Heart right ventricle (tissue), 16 donors: ENCODE measurements at regions of chr17 and their contacts with region 1.

Region 1: DNA sequence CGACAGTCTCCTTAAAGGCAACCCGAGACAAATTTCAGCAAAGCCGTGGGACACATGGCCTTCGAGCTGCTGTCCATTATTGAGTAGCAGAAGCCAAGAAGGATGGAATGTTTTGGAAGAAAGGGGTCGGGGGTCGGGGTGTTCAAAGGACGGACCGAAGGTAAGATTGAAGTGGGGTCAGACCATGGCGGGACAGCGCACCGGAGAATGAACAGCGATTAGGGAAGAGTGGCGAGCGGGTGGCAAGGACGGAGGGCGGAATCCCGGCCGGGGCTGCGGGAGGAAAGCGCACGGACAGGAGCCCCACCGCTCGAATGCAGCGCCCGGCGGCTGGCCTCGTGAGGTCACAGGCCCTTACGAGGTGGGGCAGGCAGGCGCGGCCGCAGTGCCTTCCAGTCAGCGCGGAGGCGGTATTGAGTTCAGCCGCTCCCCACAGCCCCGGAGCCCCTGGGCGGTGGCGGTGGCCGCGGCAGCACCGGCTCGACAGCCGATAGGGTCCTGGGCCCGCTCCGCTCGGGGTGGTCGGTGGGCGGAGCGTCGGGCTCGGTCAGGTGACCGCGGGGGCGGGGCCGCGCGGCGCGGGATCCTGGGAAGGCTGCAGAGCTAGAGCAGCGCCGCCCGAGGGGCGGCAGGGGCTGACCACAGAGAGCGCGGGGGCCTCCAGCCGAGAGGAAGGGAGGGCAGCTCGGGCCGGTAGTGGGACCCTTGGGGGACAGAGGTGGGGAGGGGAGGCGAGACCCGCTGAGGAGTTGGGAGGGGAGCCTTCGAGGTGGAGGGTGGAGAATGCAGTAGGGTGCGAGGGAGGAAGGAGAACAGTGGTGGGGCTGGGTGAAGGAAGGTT is at the start of gene EFCAB13:
- DNase-seq: peak; percentile 87 to 92
- ATAC-seq: peak; percentile 96 to 99 (median 98)
- H3K4me3 ChIP-seq: peak within 1 kb of the TSS; percentile 44 to 74 (median 68)
- H3K27ac ChIP-seq: peak within 1 kb of the TSS; percentile 84 to 96 (median 90)
- H3K4me1 ChIP-seq: peaks cover 0 to 11% (median 5%) of the 10 kb centered on the region in 9 donors
- H3K27me3 ChIP-seq: no peaks in the 10 kb centered on the region
- CTCF ChIP-seq: peak in 5 of 9 donors; percentile 17 to 54 (median 47)
- total RNA-seq, gene EFCAB13: 0.92 to 3.8 (median 2.1) TPM

Region 2: DNA sequence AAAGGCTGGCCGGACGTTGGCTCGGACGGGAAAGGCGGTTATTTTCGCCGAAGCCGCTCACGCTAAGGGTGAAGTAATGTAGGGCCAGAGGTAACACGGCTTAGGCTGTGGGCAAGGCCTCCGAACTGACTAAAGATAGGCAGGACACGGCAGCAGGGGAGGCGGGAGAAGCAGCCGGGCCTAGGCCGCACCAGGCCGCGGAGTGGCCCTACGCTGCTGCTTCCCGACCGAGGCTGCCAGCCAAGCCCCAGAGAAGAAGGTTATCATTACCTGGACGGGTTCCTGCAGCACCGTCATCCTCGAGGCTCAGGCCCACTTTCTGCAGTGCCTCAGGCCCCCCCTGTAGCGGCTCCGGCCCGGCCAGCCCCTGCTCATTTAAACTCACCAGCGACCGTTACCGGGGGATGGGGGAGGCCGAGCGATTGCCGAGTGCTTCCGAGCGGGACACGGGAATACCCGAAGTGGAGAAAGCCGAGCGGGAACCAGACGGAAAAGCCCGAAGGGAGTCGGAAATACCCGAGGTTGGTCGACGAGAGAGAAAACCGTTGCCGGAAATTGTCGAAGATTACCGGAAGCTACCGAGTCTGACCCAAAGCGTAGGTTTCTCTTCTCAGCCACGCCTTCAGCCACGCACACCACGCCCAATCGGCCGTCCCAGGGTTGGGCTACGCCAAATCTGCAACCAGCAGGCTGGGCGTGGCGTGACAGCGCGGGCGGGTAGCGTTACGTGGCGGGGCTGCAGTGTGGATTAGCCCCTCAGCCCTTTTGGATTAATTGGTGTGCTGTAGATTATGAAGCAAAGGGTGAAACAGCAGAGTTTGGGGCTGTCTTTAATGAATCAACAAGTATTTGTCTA is 134.5 kb before region 1 on chr17 and contains the start of gene CDC27:
- intact Hi-C with region 1: no loop called
- DNase-seq: peak; percentile 98 to 100
- ATAC-seq: peak; percentile 97 to 98 (median 98)
- H3K4me3 ChIP-seq: peak within 1 kb of the TSS; percentile 54 to 88 (median 71)
- H3K27ac ChIP-seq: peak within 1 kb of the TSS; percentile 88 to 99 (median 96)
- H3K4me1 ChIP-seq: peaks cover 5 to 48% (median 46%) of the 10 kb centered on the region in 9 donors
- H3K27me3 ChIP-seq: no peaks in the 10 kb centered on the region
- CTCF ChIP-seq: no peak
- total RNA-seq, gene CDC27: 73.7 to 103 (median 84.9) TPM

Region 3: GRCh38 chr17:47265983-47266541 is 57.5 kb before region 1 on chr17:
- intact Hi-C with region 1: no loop called
- DNase-seq: no peak
- ATAC-seq: peak in 6 of 8 donors; percentile 53 to 82 (median 70)
- H3K4me3 ChIP-seq: no peak overlapping the region
- H3K27ac ChIP-seq: peak overlapping the region in 4 of 10 donors; percentile 9 to 36 (median 25)
- H3K4me1 ChIP-seq: peaks cover 0 to 46% (median 6%) of the 10 kb centered on the region in 9 donors
- H3K27me3 ChIP-seq: no peaks in the 10 kb centered on the region
- CTCF ChIP-seq: no peak

Region 4: GRCh38 chr17:47279062-47279736 is 44.4 kb before region 1 on chr17:
- intact Hi-C with region 1: loop called in 1 of 10 experiments (anchors 1 kb)
- DNase-seq: peak; percentile 67 to 82
- ATAC-seq: peak; percentile 65 to 82 (median 79)
- H3K4me3 ChIP-seq: peak overlapping the region in 1 of 10 donors; percentile 9
- H3K27ac ChIP-seq: peak overlapping the region; percentile 73 to 92 (median 86)
- H3K4me1 ChIP-seq: peaks cover 40 to 71% (median 57%) of the 10 kb centered on the region in 9 donors
- H3K27me3 ChIP-seq: no peaks in the 10 kb centered on the region
- CTCF ChIP-seq: peak in 2 of 9 donors; percentile 10 to 15

Region 5: GRCh38 chr17:47621293-47622178 is 297.9 kb after region 1 on chr17:
- intact Hi-C with region 1: loop called in 1 of 10 experiments (anchors 10 kb)
- DNase-seq: peak; percentile 21 to 24
- ATAC-seq: peak; percentile 67 to 87 (median 76)
- H3K4me3 ChIP-seq: no peak overlapping the region
- H3K27ac ChIP-seq: peak overlapping the region in 9 of 10 donors; percentile 28 to 71 (median 57)
- H3K4me1 ChIP-seq: peaks cover 0 to 49% (median 34%) of the 10 kb centered on the region in 9 donors
- H3K27me3 ChIP-seq: no peaks in the 10 kb centered on the region
- CTCF ChIP-seq: peak in 2 of 9 donors; percentile 11 to 12